IMR-90 (cell line): ENCODE measurements at regions of chr9 and their contacts with region 1.

Region 1: DNA sequence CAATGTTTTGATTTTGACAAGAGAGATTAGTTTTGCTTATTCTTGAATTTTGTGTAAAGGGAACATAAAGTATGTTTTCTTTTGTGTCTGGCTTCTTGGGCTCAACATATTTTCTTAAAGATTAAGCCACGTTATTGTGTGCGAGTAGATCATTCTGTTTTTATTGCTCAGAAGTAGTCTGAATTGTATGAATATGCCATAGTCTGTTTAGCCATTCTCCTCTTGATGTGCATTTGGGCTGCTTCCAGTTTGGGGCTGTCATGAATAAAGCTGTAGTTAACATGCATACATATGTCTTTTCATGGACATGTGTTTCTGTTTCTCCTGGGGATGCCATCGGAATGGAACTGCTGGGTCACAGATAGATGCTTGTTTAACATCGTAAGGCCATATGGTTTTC is 198.9 kb downstream of the FANCC start:
- DNase-seq: no peak
- ATAC-seq: no peak
- H3K4me3 ChIP-seq: no peak overlapping the region
- H3K27ac ChIP-seq: no peak overlapping the region
- H3K4me1 ChIP-seq: no peaks in the 10 kb centered on the region
- H3K27me3 ChIP-seq: no peaks in the 10 kb centered on the region
- CTCF ChIP-seq: no peak
- POLR2A ChIP-seq: no peak
- RAD21 ChIP-seq: no peak

Region 2: GRCh38 chr9:94084314-94084713 is 1034.3 kb before region 1 on chr9 and contains the start of gene PTPDC1:
- CTCF ChIA-PET with region 1: no interaction called
- POLR2A ChIA-PET with region 1: no interaction called
- dilution Hi-C with region 1: no loop called
- in situ Hi-C with region 1: no loop called
- intact Hi-C with region 1: no loop called
- DNase-seq: peak; percentile 89
- ATAC-seq: peak; percentile 65
- H3K4me3 ChIP-seq: no peak within 1 kb of the TSS
- H3K27ac ChIP-seq: no peak within 1 kb of the TSS
- H3K4me1 ChIP-seq: peaks cover 7% of the 10 kb centered on the region
- H3K27me3 ChIP-seq: no peaks in the 10 kb centered on the region
- CTCF ChIP-seq: no peak
- POLR2A ChIP-seq: no peak
- RAD21 ChIP-seq: no peak
- total RNA-seq, gene PTPDC1: 6.1 TPM in 2 replicates

Region 3: DNA sequence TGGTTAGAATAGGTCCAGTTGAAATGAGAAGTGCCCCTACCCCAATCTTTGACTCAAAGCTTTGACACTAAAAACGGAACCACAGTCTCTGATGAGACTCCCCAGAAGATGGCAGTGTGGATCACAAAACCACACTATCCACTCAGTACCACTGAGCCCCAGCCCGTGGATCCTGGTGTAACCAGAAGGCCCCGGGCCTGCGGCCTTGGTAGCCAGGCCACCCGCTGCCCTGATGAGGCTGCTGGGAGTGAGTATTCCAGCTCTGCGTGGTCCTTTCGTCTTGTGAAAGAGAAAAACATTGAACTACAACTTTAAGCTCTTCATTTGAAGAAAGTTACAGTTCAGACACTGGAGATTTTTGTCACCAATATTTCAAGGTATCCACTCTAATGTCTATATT is 437.1 kb before region 1 on chr9:
- CTCF ChIA-PET with region 1: no interaction called
- POLR2A ChIA-PET with region 1: no interaction called
- dilution Hi-C with region 1: no loop called
- in situ Hi-C with region 1: no loop called
- intact Hi-C with region 1: no loop called
- DNase-seq: peak; percentile 80
- ATAC-seq: peak; percentile 99
- H3K4me3 ChIP-seq: no peak overlapping the region
- H3K27ac ChIP-seq: no peak overlapping the region
- H3K4me1 ChIP-seq: no peaks in the 10 kb centered on the region; the same call in 1 of the 2 replicates
- H3K27me3 ChIP-seq: no peaks in the 10 kb centered on the region; the same call in 1 of the 2 replicates
- CTCF ChIP-seq: peak; percentile 85
- POLR2A ChIP-seq: no peak
- RAD21 ChIP-seq: peak; percentile 92

Region 4: GRCh38 chr9:94729154-94729553 is 389.4 kb before region 1 on chr9:
- CTCF ChIA-PET with region 1: no interaction called
- POLR2A ChIA-PET with region 1: interaction called, 10 read pairs
- dilution Hi-C with region 1: no loop called
- in situ Hi-C with region 1: no loop called
- intact Hi-C with region 1: no loop called
- DNase-seq: no peak
- ATAC-seq: no peak
- H3K4me3 ChIP-seq: no peak overlapping the region
- H3K27ac ChIP-seq: no peak overlapping the region
- H3K4me1 ChIP-seq: no peaks in the 10 kb centered on the region
- H3K27me3 ChIP-seq: no peaks in the 10 kb centered on the region
- CTCF ChIP-seq: no peak
- POLR2A ChIP-seq: no peak
- RAD21 ChIP-seq: no peak

Region 5: DNA sequence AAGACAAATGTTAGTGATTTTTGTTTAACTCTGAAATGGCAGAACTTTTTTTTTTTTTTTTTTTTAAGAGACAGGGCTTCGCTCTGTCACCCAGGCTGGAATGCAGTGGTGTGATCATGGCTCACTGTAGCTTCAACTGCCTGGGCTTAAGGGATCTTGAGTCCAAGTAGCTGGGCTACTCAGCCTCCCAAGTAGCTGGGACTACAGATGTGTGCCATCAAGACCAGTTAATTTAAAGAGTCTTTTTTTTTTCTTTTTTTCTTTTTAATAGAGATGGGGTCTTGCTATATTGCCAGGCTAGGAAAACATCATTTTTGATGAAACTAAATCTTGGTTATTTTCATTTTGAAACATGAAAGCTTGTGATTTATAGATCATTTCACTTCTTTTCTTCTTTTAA is 489.7 kb after region 1 on chr9:
- CTCF ChIA-PET with region 1: no interaction called
- POLR2A ChIA-PET with region 1: interaction called, 14 read pairs
- dilution Hi-C with region 1: no loop called
- in situ Hi-C with region 1: no loop called
- intact Hi-C with region 1: no loop called
- DNase-seq: no peak
- ATAC-seq: no peak
- H3K4me3 ChIP-seq: no peak overlapping the region
- H3K27ac ChIP-seq: no peak overlapping the region
- H3K4me1 ChIP-seq: no peaks in the 10 kb centered on the region
- H3K27me3 ChIP-seq: no peaks in the 10 kb centered on the region; the same call in 1 of the 2 replicates
- CTCF ChIP-seq: no peak
- POLR2A ChIP-seq: no peak
- RAD21 ChIP-seq: no peak